ENCODE measurements at regions of chr7 and their contacts with region 1.

Region 1: GRCh38 chr7:144786522-144786921 is 49.3 kb downstream of the TPK1 start:
- DNase-seq: no peak
- H3K4me3 ChIP-seq: no peak overlapping the region
- H3K27ac ChIP-seq: no peak overlapping the region
- H3K4me1 ChIP-seq: peaks cover 0 to 16% of the 10 kb centered on the region in 2 donors
- H3K27me3 ChIP-seq: no peaks in the 10 kb centered on the region
- CTCF ChIP-seq: no peak

Region 2: DNA sequence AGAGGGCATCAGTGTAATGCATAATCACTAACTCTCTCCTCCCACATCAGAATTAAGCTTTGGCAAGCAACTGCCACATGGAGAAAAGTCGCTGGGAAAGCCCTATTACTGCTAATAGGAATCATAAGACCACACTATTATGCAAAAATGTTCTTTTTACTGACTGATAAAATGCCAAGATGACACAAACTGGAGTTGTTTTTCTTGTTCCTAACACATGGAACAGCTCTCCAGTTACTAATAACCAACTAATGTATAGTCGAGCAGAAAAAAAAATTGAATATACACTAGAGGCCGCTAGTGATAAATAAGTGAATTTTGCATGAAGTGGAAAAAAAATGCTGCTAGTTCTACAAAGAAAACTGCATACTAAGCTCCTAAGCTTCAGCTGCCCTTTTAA is 116.3 kb before region 1 on chr7:
- intact Hi-C with region 1: loop called (anchors 5 kb)
- DNase-seq: no peak
- H3K4me3 ChIP-seq: no peak overlapping the region
- H3K27ac ChIP-seq: no peak overlapping the region
- H3K4me1 ChIP-seq: no peaks in the 10 kb centered on the region
- H3K27me3 ChIP-seq: no peaks in the 10 kb centered on the region
- CTCF ChIP-seq: peak in 2 of 3 experiments; percentile 17 to 46

Region 3: DNA sequence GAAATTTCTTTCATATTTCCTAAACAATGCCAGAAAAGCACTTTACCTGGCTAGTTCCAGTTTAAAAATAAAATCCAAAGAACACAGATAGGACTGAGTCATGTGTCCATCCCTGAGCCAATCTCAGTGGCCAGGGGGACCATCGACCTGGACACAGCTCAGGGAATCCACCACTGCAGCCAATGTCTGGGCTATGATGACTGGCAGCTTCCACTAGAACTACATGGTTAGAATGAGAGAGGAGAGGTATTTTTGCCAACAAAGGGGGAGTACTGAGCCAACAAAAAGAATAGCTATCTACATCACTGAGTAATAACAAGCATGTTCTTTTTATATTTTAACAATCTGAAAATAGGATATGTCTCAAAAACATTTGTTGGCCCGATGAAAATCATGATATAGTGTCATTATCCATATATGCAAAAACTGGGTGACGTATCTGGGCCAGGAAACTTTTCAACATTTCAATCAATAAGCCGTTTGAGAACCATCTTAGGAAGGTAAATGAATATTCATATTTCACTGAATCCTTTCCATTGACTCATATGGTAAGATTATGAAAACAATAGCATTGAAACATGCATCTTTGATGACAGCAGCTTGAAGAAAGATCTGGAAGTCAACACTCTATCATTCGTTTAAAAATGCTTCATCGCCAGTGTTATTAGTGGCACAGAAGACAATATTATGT is 54.7 kb before region 1 on chr7:
- intact Hi-C with region 1: loop called (anchors 5 kb)
- DNase-seq: peak in 1 of 2 donors; percentile 64
- H3K4me3 ChIP-seq: peak overlapping the region; percentile 9 to 18
- H3K27ac ChIP-seq: peak overlapping the region; percentile 26 to 53
- H3K4me1 ChIP-seq: peaks cover 0 to 5% of the 10 kb centered on the region in 2 donors
- H3K27me3 ChIP-seq: no peaks in the 10 kb centered on the region
- CTCF ChIP-seq: no peak

Measured in ascending aorta (tissue), 2 donors.